SK-N-SH (cell line): ENCODE measurements at regions of chr1 and their contacts with region 1.

Region 1: DNA sequence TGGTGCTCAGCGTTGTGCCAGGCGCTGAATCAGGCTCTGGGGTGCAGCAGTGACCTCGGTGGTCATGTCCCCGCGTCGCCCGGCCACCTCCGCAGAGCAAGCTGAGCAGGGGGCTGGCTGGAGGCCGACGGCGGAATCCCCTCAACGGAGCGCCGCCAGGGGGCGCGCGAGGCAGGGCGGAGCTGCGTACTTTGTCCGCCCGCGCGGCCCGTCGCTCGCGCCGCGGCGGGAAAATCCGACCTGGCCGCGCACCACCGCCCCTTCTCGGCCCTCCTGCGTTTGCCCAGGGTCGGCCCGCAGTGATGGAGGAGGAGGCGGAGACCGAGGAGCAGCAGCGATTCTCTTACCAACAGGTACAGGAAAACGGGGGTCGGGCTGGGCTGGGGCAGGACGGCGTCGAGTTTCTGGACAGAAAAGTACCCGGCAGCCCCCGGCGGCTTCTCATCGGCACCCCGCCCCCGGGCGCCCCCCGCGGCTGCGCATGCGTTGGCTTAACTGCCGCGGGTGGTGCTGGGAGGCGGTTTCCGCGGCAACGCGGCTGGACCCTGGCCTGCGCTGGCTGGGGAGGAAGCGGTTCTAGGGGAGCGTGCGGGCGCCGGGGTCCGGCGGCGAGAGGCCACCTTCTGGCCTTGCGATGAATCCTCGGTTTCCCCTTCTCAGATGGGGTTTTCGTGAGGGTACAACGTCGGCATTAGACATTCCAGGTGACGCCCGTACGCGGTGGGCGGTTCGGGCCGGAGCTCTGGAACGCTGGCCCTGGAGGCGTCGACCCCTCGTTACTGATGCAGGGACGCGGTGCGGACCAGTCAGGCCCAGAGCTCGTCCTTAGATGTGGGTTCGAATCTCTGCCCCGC is at the start of gene CENPS:
- DNase-seq: peak; percentile 98
- H3K4me3 ChIP-seq: peak within 1 kb of the TSS; percentile 68 to 82
- H3K27ac ChIP-seq: peak within 1 kb of the TSS; percentile 67 to 85
- H3K4me1 ChIP-seq: peaks cover 3 to 9% of the 10 kb centered on the region in 2 experiments; a peak in 1 of 4 replicates
- H3K27me3 ChIP-seq: no peaks in the 10 kb centered on the region
- CTCF ChIP-seq: peak; percentile 77
- EP300 ChIP-seq: no peak
- RAD21 ChIP-seq: peak; percentile 63
- polyA plus RNA-seq, gene CENPS: 16.6 and 20.0 TPM in 2 replicates

Region 2: GRCh38 chr1:10170239-10170574 is 260.2 kb before region 1 on chr1:
- CTCF ChIA-PET with region 1: no interaction called
- POLR2A ChIA-PET with region 1: no interaction called
- DNase-seq: no peak
- H3K4me3 ChIP-seq: no peak overlapping the region
- H3K27ac ChIP-seq: no peak overlapping the region
- H3K4me1 ChIP-seq: no peaks in the 10 kb centered on the region
- H3K27me3 ChIP-seq: no peaks in the 10 kb centered on the region
- CTCF ChIP-seq: no peak
- EP300 ChIP-seq: no peak
- RAD21 ChIP-seq: no peak

Region 3: DNA sequence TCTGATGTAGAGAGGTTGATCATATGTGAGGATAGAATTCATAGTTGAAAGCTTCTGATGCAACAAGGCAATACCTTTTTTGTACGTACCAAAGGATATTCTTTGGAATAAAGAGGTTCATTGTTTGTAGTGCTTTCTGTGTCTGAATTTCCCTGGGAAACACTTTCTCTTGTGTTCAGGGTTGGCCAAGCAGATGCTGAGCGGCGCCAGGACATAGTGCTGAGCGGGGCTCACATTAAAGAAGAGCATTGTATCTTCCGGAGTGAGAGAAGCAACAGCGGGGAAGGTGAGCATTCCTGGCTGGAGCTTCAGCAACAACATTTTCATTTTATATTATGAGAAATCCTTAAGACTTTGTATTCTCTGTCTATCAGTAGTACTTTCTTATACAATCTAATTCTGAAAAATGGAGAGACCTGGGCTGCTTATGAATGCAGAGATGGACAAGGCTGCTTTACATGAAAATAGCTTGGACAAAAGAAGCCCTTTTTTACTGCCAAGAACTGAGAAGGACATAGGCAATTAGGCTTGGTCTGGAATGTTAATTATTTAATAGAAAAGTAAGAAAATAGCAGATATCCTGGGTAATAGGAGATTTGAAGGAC is 134.9 kb before region 1 on chr1:
- CTCF ChIA-PET with region 1: no interaction called
- POLR2A ChIA-PET with region 1: no interaction called
- DNase-seq: no peak
- H3K4me3 ChIP-seq: no peak overlapping the region
- H3K27ac ChIP-seq: no peak overlapping the region
- H3K4me1 ChIP-seq: no peaks in the 10 kb centered on the region
- H3K27me3 ChIP-seq: no peaks in the 10 kb centered on the region
- CTCF ChIP-seq: no peak
- EP300 ChIP-seq: no peak
- RAD21 ChIP-seq: no peak

Region 4: GRCh38 chr1:10378081-10378841 is 52.2 kb before region 1 on chr1:
- CTCF ChIA-PET with region 1: interaction called, 30 read pairs
- POLR2A ChIA-PET with region 1: no interaction called
- DNase-seq: no peak
- H3K4me3 ChIP-seq: no peak overlapping the region
- H3K27ac ChIP-seq: peak overlapping the region in 1 of 2 experiments; percentile 43; a peak in 1 of 4 replicates
- H3K4me1 ChIP-seq: 0 out of 4 replicates have a peak, but pooled peaks cover 0 to 7% of the 10 kb centered on the region in 2 experiments
- H3K27me3 ChIP-seq: no peaks in the 10 kb centered on the region
- CTCF ChIP-seq: no peak
- EP300 ChIP-seq: no peak
- RAD21 ChIP-seq: no peak

Region 5: DNA sequence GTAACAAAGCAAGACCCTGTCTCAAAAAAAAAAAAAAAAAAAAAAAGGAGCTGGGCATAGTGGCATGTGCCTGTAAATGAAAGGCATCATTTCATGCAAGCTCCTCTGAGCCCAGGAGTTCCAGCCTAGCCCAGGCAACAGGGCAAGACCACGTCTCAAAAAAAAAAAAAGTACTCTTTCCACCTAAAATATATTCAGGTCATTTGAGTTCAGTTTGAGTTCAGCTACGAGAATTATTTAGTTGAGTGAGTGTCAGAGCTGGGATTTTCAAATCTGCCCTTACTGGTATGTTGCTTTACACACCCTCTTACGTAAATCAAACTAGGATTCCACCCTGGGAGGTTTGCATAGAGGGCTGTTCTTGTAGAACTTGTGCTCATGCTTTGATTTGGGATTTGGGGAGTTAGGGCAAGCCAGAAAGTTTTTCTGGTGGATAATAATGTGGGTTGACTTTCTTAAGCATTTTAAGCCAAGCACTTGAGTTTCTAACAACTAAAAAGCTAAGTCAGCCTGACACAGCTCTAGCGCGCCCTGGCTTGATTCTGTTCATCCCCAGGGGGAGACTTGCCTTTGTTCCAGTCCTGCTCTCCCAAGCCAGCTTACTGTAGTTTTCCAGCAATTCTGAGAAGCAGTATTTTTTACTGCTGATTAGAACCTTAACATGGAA is 42.9 kb before region 1 on chr1:
- CTCF ChIA-PET with region 1: interaction called, 19 read pairs
- POLR2A ChIA-PET with region 1: interaction called, 3 read pairs
- DNase-seq: no peak
- H3K4me3 ChIP-seq: peak overlapping the region in 1 of 2 experiments; percentile 51; a peak in 2 of 4 replicates
- H3K27ac ChIP-seq: peak overlapping the region; percentile 54 to 90
- H3K4me1 ChIP-seq: peaks cover 0 to 9% of the 10 kb centered on the region in 2 experiments; a peak in 1 of 4 replicates
- H3K27me3 ChIP-seq: no peaks in the 10 kb centered on the region
- CTCF ChIP-seq: peak; percentile 28; the same call in 1 of the 2 replicates
- EP300 ChIP-seq: no peak
- RAD21 ChIP-seq: no peak

Region 6: DNA sequence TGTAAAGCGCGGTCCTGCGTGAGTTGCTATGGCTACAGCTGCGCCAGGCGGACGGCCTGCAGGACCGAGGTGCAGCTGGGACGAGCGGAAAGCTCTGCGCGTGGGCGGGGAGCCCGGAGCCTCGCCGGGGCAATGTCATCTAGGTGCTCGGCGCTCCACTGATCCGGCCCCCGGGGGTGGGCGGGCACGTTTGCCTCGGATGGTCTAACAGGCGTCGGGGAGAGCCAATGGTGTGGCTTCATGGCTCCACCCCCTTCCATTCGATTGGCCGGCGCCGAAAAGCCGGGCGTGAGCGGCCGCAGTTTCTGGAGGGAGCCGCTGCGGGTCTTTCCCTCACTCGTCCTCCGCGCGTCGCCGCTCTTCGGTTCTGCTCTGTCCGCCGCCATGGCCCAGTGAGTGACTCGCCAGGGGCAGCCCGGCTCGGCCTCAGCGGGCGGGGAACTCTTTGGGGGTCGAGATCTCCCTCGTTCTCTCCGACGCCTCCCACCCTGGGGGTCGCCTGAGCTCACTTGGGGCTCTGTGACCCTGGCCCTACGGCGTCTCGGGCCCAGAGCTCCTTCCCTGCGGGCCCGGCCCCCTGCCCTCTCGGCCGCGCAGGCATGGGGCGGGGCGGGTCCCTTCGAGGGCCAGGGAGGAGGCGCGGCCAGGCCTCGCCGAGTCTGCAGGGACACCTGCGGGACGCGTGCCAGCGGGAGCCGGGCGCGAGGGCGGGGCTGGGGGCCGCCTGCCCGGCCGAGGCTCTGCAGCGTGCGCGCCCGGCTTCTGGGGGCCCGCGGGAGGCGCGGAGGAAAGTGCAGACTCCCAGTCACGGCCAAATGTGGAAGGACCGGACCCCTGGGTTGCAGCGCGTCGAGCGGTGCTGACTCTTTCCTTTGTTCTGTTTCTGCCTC is 31.5 kb before region 1 on chr1 and contains the start of gene PGD:
- CTCF ChIA-PET with region 1: interaction called, 18 read pairs
- POLR2A ChIA-PET with region 1: interaction called, 3 read pairs
- DNase-seq: peak; percentile 100
- H3K4me3 ChIP-seq: peak within 1 kb of the TSS; percentile 74 to 96
- H3K27ac ChIP-seq: peak within 1 kb of the TSS; percentile 85 to 88
- H3K4me1 ChIP-seq: peaks cover 8 to 25% of the 10 kb centered on the region in 2 experiments; a peak in 3 of 4 replicates
- H3K27me3 ChIP-seq: no peaks in the 10 kb centered on the region
- CTCF ChIP-seq: no peak; the same call in 1 of the 2 replicates
- EP300 ChIP-seq: peak in 1 of 2 experiments; percentile 7; a peak in 1 of 4 replicates
- RAD21 ChIP-seq: no peak
- polyA plus RNA-seq, gene PGD: 75.3 and 76.2 TPM in 2 replicates

Region 7: GRCh38 chr1:10451287-10451686 is 20.8 kb after region 1 on chr1:
- CTCF ChIA-PET with region 1: interaction called, 16 read pairs
- POLR2A ChIA-PET with region 1: interaction called, 5 read pairs
- DNase-seq: peak; percentile 65
- H3K4me3 ChIP-seq: peak overlapping the region in 1 of 2 experiments; percentile 45; a peak in 1 of 4 replicates
- H3K27ac ChIP-seq: peak overlapping the region; percentile 39 to 50; a peak in 3 of 4 replicates
- H3K4me1 ChIP-seq: peaks cover 5 to 12% of the 10 kb centered on the region in 2 experiments
- H3K27me3 ChIP-seq: no peaks in the 10 kb centered on the region
- CTCF ChIP-seq: no peak
- EP300 ChIP-seq: no peak
- RAD21 ChIP-seq: no peak